A549 (cell line): ENCODE measurements at regions of chr17 and their contacts with region 1.

Region 1: DNA sequence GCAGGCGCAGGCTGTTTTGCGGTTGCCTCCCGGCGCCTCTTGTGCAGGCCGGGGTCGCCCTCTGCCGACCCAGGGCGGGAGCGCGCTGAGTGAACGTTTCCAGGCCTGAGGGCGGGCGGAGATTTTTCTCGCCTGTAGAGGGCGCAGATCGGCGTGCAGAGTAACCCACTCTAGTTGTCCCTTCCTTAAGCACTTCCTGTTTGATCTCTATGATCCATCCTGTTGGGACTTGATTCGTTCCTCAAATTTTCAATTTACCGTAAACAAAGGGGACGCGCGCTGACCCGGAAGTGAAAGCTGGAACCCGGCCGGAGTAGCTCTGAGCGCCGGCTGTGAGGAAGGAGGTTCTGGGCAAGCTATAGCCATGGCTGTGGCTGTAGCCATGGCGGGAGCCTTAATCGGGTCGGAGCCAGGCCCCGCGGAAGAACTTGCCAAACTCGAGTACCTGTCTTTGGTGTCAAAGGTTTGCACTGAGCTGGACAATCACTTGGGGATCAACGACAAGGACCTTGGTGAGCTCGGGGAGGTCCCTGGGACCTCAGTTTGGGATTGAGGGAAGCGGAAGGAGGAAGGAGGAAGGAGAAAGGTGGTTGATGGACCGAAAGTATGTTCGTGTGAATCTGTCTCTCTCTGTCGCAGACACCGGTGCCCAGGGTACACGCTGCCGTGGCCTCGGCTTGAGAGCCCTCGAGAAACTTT is at the start of gene DHX8:
- DNase-seq: peak; percentile 99 to 100
- ATAC-seq: peak; percentile 97 to 99
- H3K4me3 ChIP-seq: peak within 1 kb of the TSS; percentile 62
- H3K27ac ChIP-seq: peak within 1 kb of the TSS; percentile 81 to 90
- H3K4me1 ChIP-seq: peaks cover 30% of the 10 kb centered on the region
- CTCF ChIP-seq: peak; percentile 100
- EP300 ChIP-seq: no peak
- POLR2A ChIP-seq: peak; percentile 88
- RAD21 ChIP-seq: peak; percentile 100
- polyA plus RNA-seq, gene DHX8: 66.0 and 70.4 TPM in 2 replicates

Region 2: GRCh38 chr17:43360739-43361505 is 122.9 kb before region 1 on chr17:
- CTCF ChIA-PET with region 1: interaction called, 41 read pairs
- POLR2A ChIA-PET with region 1: interaction called, 43 read pairs
- DNase-seq: peak; percentile 98 to 100
- ATAC-seq: peak; percentile 87 to 92
- H3K4me3 ChIP-seq: peak overlapping the region; percentile 62
- H3K27ac ChIP-seq: peak overlapping the region; percentile 88 to 91
- H3K4me1 ChIP-seq: peaks cover 28% of the 10 kb centered on the region
- CTCF ChIP-seq: no peak
- EP300 ChIP-seq: peak in 1 of 2 experiments; percentile 46; a peak in 2 of 5 replicates
- POLR2A ChIP-seq: peak; percentile 100
- RAD21 ChIP-seq: peak in 1 of 2 experiments; percentile 32; a peak in 1 of 5 replicates

Region 3: DNA sequence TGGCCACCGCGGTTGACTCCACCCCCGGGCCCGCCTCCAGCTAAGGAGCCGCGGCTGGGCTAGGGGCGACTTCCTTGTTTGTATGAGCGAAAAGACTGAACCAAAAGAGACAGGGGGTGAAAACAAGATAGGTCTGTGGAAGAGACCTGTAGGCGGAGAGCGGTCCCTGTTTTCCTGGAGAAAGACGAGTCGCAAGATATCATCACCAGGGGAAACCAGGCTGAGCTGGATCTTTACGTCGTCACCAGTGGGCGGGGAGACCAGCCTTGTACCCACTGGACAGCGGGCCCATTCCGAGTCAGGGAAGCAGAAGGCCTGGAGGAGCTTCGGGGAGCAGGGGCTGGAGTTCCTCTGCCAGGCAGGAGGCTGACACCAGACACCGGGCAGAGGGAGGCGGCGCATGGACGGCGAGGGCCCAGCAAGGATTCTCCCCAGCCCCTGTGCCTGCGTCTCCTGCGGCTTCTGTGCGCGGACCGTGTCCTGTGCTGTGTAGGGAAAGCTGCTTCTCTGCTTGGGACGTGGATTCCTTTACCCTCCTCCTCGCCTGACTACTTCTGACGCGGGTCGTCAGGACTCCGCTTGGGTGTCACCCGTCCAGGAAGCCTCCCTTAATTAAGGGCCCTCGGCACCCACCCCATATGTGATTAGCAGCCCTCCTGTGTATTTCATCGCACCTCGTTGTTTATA is 95.3 kb before region 1 on chr17:
- CTCF ChIA-PET with region 1: interaction called, 2,036 read pairs
- POLR2A ChIA-PET with region 1: interaction called, 41 read pairs
- DNase-seq: peak; percentile 87 to 95
- ATAC-seq: peak; percentile 92
- H3K4me3 ChIP-seq: peak overlapping the region; percentile 67
- H3K27ac ChIP-seq: peak overlapping the region; percentile 83 to 93
- H3K4me1 ChIP-seq: peaks cover 11% of the 10 kb centered on the region
- CTCF ChIP-seq: no peak
- EP300 ChIP-seq: no peak
- POLR2A ChIP-seq: peak; percentile 94
- RAD21 ChIP-seq: no peak

Region 4: GRCh38 chr17:43449470-43450248 is 34.2 kb before region 1 on chr17:
- CTCF ChIA-PET with region 1: interaction called, 29 read pairs
- POLR2A ChIA-PET with region 1: interaction called, 3 read pairs
- DNase-seq: peak; percentile 67 to 80
- ATAC-seq: peak; percentile 88 to 91
- H3K4me3 ChIP-seq: no peak overlapping the region
- H3K27ac ChIP-seq: peak overlapping the region; percentile 70 to 87
- H3K4me1 ChIP-seq: peaks cover 26% of the 10 kb centered on the region
- CTCF ChIP-seq: no peak
- EP300 ChIP-seq: no peak; a peak in 1 of 5 replicates
- POLR2A ChIP-seq: no peak
- RAD21 ChIP-seq: peak in 1 of 2 experiments; percentile 26; a peak in 2 of 5 replicates

Region 5: DNA sequence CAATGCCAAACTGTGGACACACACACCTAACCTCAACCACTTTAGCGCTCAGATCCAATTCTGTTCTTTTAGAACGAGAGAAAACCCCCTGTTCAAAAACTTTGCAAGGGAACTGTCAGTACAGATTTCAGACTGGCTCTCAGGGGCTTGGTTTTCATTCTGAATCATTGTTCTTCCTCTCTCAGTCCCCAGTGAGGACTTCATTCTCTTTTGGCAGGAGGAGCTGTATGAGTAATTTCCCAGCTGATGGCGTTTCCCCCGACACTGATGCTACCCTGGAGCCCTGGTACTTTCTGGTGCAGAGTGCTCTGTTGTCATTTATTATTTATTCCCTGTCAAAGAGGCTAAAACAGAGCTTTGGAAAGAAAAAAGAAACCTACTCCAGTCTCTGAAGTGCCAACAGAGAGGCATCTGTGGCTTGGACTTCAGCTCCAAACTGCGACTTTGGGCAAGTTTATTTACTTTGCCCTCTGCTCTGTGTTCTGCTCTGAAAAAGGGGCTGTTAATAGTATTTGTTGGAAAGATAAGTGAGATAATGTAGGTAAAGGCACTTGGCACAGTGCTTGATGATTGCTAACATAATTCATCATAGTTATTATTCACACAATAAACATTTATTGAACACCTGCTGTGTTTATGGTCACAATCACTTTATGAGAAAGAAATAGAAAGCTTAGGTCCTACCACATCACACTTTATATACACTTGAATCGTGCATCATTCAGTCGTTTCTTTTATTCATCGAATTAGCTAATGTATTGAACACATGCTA is 34.0 kb after region 1 on chr17:
- CTCF ChIA-PET with region 1: interaction called, 18 read pairs
- POLR2A ChIA-PET with region 1: no interaction called
- DNase-seq: no peak
- ATAC-seq: no peak
- H3K4me3 ChIP-seq: no peak overlapping the region
- H3K27ac ChIP-seq: no peak overlapping the region
- H3K4me1 ChIP-seq: no peaks in the 10 kb centered on the region
- CTCF ChIP-seq: no peak
- EP300 ChIP-seq: no peak
- POLR2A ChIP-seq: no peak
- RAD21 ChIP-seq: no peak

Region 6: GRCh38 chr17:43546319-43547188 is 62.7 kb after region 1 on chr17 and contains the start of gene ETV4:
- CTCF ChIA-PET with region 1: interaction called, 10 read pairs
- POLR2A ChIA-PET with region 1: interaction called, 11 read pairs
- DNase-seq: peak; percentile 96 to 100
- ATAC-seq: peak; percentile 76 to 86
- H3K4me3 ChIP-seq: peak within 1 kb of the TSS; percentile 60
- H3K27ac ChIP-seq: peak within 1 kb of the TSS; percentile 85 to 95
- H3K4me1 ChIP-seq: peaks cover 23% of the 10 kb centered on the region
- CTCF ChIP-seq: no peak
- EP300 ChIP-seq: no peak
- POLR2A ChIP-seq: no peak
- RAD21 ChIP-seq: no peak
- polyA plus RNA-seq, gene ETV4: 39.1 and 42.5 TPM in 2 replicates